Right cardiac atrium (tissue), 5 donors: ENCODE measurements at regions of chr22 and their contacts with region 1.

Region 1: GRCh38 chr22:40024201-40025061 is 29.7 kb downstream of the FAM83F start:
- DNase-seq: peak; percentile 68 to 87 (median 83)
- ATAC-seq: peak; percentile 79
- H3K4me3 ChIP-seq: no peak overlapping the region
- H3K27ac ChIP-seq: no peak overlapping the region
- H3K4me1 ChIP-seq: no peaks in the 10 kb centered on the region
- H3K27me3 ChIP-seq: no peaks in the 10 kb centered on the region

Region 2: GRCh38 chr22:39559454-39560105 is 464.9 kb before region 1 on chr22:
- intact Hi-C with region 1: loop called in 1 of 4 experiments (anchors 5 kb)
- DNase-seq: no peak
- ATAC-seq: no peak
- H3K4me3 ChIP-seq: no peak overlapping the region
- H3K27ac ChIP-seq: no peak overlapping the region
- H3K4me1 ChIP-seq: no peaks in the 10 kb centered on the region
- H3K27me3 ChIP-seq: no peaks in the 10 kb centered on the region

Region 3: GRCh38 chr22:39622881-39623367 is 401.5 kb before region 1 on chr22:
- intact Hi-C with region 1: loop called in 3 of 4 experiments (anchors 2 to 10 kb)
- DNase-seq: peak; percentile 56 to 84 (median 81)
- ATAC-seq: peak in 1 of 2 donors; percentile 54
- H3K4me3 ChIP-seq: no peak overlapping the region
- H3K27ac ChIP-seq: no peak overlapping the region
- H3K4me1 ChIP-seq: no peaks in the 10 kb centered on the region
- H3K27me3 ChIP-seq: no peaks in the 10 kb centered on the region

Region 4: DNA sequence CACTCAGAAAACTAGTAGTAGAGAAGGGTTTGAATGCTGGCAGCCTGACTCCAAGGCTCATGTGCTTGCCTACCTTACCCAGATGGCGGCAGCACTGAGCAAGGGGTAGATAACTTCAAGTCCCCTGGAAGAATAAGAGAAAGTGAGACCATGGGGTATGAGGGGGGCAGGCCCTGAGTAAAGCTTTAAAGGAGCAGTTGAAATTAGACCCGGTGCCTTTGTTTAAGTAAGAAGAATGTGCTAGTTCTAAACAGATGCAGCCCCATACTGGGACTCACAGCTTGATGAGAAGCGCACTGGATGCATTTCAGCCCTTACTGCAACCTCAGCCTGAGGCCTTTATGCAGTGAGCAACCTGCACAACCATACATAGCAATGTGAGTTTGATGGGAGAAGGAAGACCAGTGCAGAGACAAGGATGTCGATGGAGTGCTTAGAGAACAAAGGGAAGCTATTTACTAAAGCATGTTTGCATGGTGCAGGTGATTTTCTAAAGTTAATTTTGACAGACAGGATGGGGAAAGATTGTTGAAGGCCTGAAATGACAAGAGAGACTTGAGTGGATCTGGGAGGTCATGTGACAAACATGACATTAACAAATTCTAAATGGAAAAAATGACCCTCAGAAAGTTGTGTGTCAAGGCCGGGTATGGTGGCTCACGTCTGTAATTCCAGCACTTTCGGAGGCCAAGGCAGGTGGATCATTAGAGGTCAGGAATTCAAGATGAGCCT is 91.3 kb before region 1 on chr22:
- intact Hi-C with region 1: loop called in 1 of 4 experiments (anchors 10 kb)
- DNase-seq: no peak
- ATAC-seq: no peak
- H3K4me3 ChIP-seq: no peak overlapping the region
- H3K27ac ChIP-seq: no peak overlapping the region
- H3K4me1 ChIP-seq: no peaks in the 10 kb centered on the region
- H3K27me3 ChIP-seq: peaks cover 5% of the 10 kb centered on the region

Region 5: GRCh38 chr22:39946503-39947219 is 77.8 kb before region 1 on chr22:
- intact Hi-C with region 1: no loop called
- DNase-seq: no peak
- ATAC-seq: peak in 1 of 2 donors; percentile 32
- H3K4me3 ChIP-seq: no peak overlapping the region
- H3K27ac ChIP-seq: no peak overlapping the region
- H3K4me1 ChIP-seq: peaks cover 2% of the 10 kb centered on the region
- H3K27me3 ChIP-seq: no peaks in the 10 kb centered on the region

Region 6: DNA sequence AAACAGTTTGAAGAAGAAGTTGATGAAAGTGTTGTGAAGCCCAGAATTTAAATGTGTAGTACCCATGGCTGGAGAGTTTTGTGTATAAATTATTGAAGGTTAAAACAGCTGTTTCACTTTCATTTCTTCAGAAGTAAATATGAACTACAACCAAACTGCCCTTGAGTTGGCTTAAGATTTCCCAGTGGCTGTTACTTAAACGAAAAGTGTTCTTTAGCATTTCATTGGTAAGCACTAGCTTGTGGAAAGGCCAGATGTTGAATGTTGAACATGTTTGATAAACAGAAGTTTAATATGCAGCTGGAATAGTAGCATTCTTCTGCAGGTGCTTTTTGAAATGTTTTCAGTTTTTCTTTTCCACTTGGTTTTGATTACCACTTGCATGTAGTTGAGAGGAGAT is 70.1 kb after region 1 on chr22:
- intact Hi-C with region 1: no loop called
- DNase-seq: no peak
- ATAC-seq: no peak
- H3K4me3 ChIP-seq: no peak overlapping the region
- H3K27ac ChIP-seq: no peak overlapping the region
- H3K4me1 ChIP-seq: no peaks in the 10 kb centered on the region
- H3K27me3 ChIP-seq: no peaks in the 10 kb centered on the region

Region 7: DNA sequence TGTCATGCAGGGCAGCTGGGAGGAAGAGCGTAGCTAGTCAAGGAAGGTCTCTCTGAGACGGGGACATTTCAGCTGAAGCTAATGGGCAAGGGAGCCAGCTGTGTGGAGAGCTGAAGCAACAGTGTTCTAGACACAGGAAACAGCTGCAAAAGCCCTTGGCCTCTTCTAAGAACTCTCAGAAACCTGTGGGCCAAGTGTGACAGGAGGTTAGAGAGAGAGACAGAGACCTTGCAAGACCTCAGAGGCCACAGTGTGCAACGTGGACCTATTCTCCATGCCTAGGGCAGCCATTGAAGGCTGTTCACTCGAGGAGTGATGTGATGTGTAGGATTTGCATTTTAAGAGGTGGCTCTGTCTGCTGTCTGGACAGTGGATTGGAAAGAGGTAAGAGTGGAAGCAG is 104.6 kb after region 1 on chr22:
- intact Hi-C with region 1: no loop called
- DNase-seq: no peak
- ATAC-seq: no peak
- H3K4me3 ChIP-seq: no peak overlapping the region
- H3K27ac ChIP-seq: no peak overlapping the region
- H3K4me1 ChIP-seq: no peaks in the 10 kb centered on the region
- H3K27me3 ChIP-seq: no peaks in the 10 kb centered on the region